ENCODE measurements at regions of chr19 and their contacts with region 1.

Region 1: GRCh38 chr19:33778089-33778791 is 18.4 kb upstream of the KCTD15 start:
- DNase-seq: peak; percentile 69
- H3K4me3 ChIP-seq: no peak overlapping the region
- H3K27ac ChIP-seq: no peak overlapping the region
- H3K4me1 ChIP-seq: peaks cover 6% of the 10 kb centered on the region
- H3K27me3 ChIP-seq: peaks cover 0 to 4% of the 10 kb centered on the region in 2 experiments
- CTCF ChIP-seq: peak; percentile 100
- POLR2A ChIP-seq: no peak

Region 2: DNA sequence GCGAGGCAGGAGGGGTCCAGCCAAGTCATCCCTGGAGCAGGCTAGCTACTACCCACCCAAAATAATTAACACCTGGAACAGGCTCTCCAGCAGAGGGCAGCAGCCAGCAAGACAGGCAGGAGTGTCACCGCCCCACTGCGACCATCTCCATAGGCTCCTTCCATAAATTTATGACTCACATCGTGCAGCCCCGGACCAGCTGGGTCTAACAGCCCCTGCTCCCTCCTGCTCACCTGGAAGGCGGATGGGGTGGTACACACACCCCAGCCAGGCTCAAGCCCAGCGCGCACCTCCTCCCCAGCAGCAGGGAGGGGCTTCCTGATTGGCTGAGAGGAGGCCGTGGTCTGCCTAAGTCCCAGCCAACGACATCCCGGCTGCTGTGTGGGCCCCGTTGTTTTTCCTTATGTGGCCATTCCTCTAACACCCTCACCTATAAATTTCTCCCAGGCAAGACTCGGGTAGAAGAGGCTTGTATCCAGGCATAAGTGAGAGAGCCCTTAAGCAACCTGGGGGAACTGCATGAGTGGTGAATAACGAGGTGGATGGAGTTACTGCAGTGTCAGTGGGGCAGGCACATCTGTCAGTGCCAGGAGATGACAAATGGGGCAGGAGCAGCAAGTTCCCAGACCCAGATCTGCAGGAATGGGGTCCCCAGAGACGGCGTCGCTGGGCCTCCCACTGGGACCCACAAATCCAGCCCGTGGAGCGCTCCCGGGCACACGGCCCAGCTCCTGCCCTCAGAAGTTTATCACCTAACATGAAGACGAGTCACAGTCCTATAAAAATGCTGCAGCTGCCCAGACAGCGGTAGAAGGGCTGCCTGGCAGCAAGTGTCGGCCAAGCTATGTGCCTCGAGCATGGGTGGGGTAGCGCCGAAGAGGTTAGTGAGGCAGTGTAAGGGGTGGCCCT is 361.7 kb before region 1 on chr19:
- CTCF ChIA-PET with region 1: interaction called, 200 read pairs
- POLR2A ChIA-PET with region 1: no interaction called
- dilution Hi-C with region 1: no loop called
- intact Hi-C with region 1: no loop called
- DNase-seq: peak; percentile 62
- H3K4me3 ChIP-seq: no peak overlapping the region
- H3K27ac ChIP-seq: no peak overlapping the region
- H3K4me1 ChIP-seq: no peaks in the 10 kb centered on the region
- H3K27me3 ChIP-seq: no peaks in the 10 kb centered on the region
- CTCF ChIP-seq: peak; percentile 72 to 79
- POLR2A ChIP-seq: no peak

Region 3: DNA sequence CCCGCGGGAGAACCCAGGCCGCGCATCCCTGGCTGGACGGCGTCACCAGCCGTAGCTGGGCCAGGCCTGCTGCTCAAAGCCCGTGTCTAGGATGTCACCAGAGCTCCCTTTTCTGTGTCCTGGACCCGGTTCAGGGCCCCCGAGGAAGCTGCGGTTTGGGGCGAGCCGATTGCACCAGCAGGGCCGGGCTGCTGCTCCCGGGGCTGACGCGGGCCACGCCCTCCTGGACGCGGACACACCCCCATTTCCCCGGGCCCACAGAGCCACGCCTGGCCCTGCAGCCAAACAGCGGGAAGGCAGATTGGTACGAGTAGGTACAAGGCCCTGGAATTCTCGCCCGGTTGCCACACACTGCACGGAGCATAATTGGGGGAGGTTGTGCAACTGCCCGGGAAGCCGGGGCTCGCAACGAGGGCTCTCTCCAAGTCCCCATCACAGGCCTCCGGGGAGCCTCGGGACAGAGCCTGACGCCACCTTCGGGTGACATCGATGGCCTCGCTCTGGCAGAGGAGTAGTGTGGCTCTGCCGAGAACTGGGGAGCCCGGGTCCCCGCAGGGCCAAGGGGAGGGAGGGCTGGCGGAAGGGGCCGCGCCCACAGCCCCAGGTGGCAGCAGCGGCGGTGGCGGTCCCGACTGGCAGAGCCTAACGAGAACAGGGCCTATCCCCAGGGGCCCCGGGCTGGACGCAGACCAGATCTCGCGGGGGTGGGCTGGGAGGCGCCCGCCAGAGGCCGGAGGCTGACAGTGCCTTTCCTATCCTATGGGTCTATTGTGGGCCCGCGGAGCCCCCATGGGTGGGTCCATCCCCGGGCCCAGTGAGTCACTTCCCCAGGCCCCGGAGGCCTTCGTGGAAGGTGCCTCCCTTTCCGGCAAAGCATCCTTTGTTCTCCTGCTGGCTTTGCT is 41.9 kb after region 1 on chr19:
- CTCF ChIA-PET with region 1: interaction called, 10 read pairs
- POLR2A ChIA-PET with region 1: no interaction called
- dilution Hi-C with region 1: no loop called
- intact Hi-C with region 1: no loop called
- DNase-seq: peak; percentile 55
- H3K4me3 ChIP-seq: peak overlapping the region in 2 of 3 experiments; percentile 9 to 26
- H3K27ac ChIP-seq: peak overlapping the region; percentile 69
- H3K4me1 ChIP-seq: peaks cover 26% of the 10 kb centered on the region
- H3K27me3 ChIP-seq: no peaks in the 10 kb centered on the region
- CTCF ChIP-seq: no peak
- POLR2A ChIP-seq: no peak

Region 4: GRCh38 chr19:33905937-33906576 is 127.8 kb after region 1 on chr19:
- CTCF ChIA-PET with region 1: interaction called, 10 read pairs
- POLR2A ChIA-PET with region 1: no interaction called
- dilution Hi-C with region 1: no loop called
- intact Hi-C with region 1: no loop called
- DNase-seq: peak; percentile 22
- H3K4me3 ChIP-seq: peak overlapping the region in 2 of 3 experiments; percentile 2 to 24
- H3K27ac ChIP-seq: peak overlapping the region; percentile 83
- H3K4me1 ChIP-seq: peaks cover 20% of the 10 kb centered on the region
- H3K27me3 ChIP-seq: peaks cover 0 to 2% of the 10 kb centered on the region in 2 experiments
- CTCF ChIP-seq: no peak
- POLR2A ChIP-seq: no peak

Region 5: GRCh38 chr19:33998739-33999345 is 220.6 kb after region 1 on chr19:
- CTCF ChIA-PET with region 1: interaction called, 219 read pairs
- POLR2A ChIA-PET with region 1: no interaction called
- dilution Hi-C with region 1: no loop called
- intact Hi-C with region 1: loop called (anchors 1 kb)
- DNase-seq: peak; percentile 21
- H3K4me3 ChIP-seq: no peak overlapping the region
- H3K27ac ChIP-seq: no peak overlapping the region
- H3K4me1 ChIP-seq: no peaks in the 10 kb centered on the region
- H3K27me3 ChIP-seq: peaks cover 3 to 6% of the 10 kb centered on the region in 2 experiments
- CTCF ChIP-seq: peak; percentile 11 to 17
- POLR2A ChIP-seq: no peak

Region 6: GRCh38 chr19:34096020-34096915 is 318.0 kb after region 1 on chr19:
- CTCF ChIA-PET with region 1: interaction called, 387 read pairs
- POLR2A ChIA-PET with region 1: interaction called, 3 read pairs
- dilution Hi-C with region 1: no loop called
- intact Hi-C with region 1: loop called (anchors 1 kb)
- DNase-seq: peak; percentile 59
- H3K4me3 ChIP-seq: no peak overlapping the region
- H3K27ac ChIP-seq: no peak overlapping the region
- H3K4me1 ChIP-seq: no peaks in the 10 kb centered on the region
- H3K27me3 ChIP-seq: peaks cover 0 to 4% of the 10 kb centered on the region in 2 experiments
- CTCF ChIP-seq: peak; percentile 33 to 47
- POLR2A ChIP-seq: no peak